ENCODE measurements at regions of chr11 and their contacts with region 1.

Region 1: GRCh38 chr11:46588131-46588530 is 5.7 kb downstream of the AMBRA1 start:
- DNase-seq: no peak
- ATAC-seq: no peak
- H3K4me3 ChIP-seq: no peak overlapping the region
- H3K27ac ChIP-seq: no peak overlapping the region
- H3K4me1 ChIP-seq: no peaks in the 10 kb centered on the region
- H3K27me3 ChIP-seq: no peaks in the 10 kb centered on the region
- CTCF ChIP-seq: no peak
- EP300 ChIP-seq: no peak
- POLR2A ChIP-seq: no peak
- RAD21 ChIP-seq: no peak

Region 2: GRCh38 chr11:46570790-46571398 is 17.2 kb before region 1 on chr11:
- CTCF ChIA-PET with region 1: interaction called, 3 read pairs
- POLR2A ChIA-PET with region 1: interaction called, 10 read pairs
- RAD21 ChIA-PET with region 1: no interaction called
- SMC1A ChIA-PET with region 1: interaction called, 8 read pairs
- in situ Hi-C with region 1: no loop called
- intact Hi-C with region 1: no loop called
- DNase-seq: no peak
- ATAC-seq: peak; percentile 48
- H3K4me3 ChIP-seq: no peak overlapping the region
- H3K27ac ChIP-seq: no peak overlapping the region
- H3K4me1 ChIP-seq: peaks cover 8% of the 10 kb centered on the region
- H3K27me3 ChIP-seq: no peaks in the 10 kb centered on the region
- CTCF ChIP-seq: no peak
- EP300 ChIP-seq: no peak
- POLR2A ChIP-seq: no peak
- RAD21 ChIP-seq: no peak

Region 3: GRCh38 chr11:46700241-46701077 is 112.3 kb after region 1 on chr11 and contains the starts of genes ARHGAP1 and ZNF408:
- CTCF ChIA-PET with region 1: no interaction called
- POLR2A ChIA-PET with region 1: no interaction called
- RAD21 ChIA-PET with region 1: no interaction called
- SMC1A ChIA-PET with region 1: no interaction called
- in situ Hi-C with region 1: no loop called
- intact Hi-C with region 1: no loop called
- DNase-seq: peak; percentile 96
- ATAC-seq: peak; percentile 98
- H3K4me3 ChIP-seq: peak within 1 kb of the TSS; percentile 92
- H3K27ac ChIP-seq: peak within 1 kb of the TSS; percentile 99
- H3K4me1 ChIP-seq: peaks cover 4% of the 10 kb centered on the region
- H3K27me3 ChIP-seq: no peaks in the 10 kb centered on the region
- CTCF ChIP-seq: no peak
- EP300 ChIP-seq: no peak
- POLR2A ChIP-seq: peak; percentile 91
- RAD21 ChIP-seq: no peak
- polyA plus RNA-seq, gene ARHGAP1: 4.3 to 9.4 TPM
- polyA plus RNA-seq, gene ZNF408: 0.19 to 0.35 TPM

Region 4: GRCh38 chr11:46710821-46711269 is 122.7 kb after region 1 on chr11:
- CTCF ChIA-PET with region 1: no interaction called
- POLR2A ChIA-PET with region 1: no interaction called
- RAD21 ChIA-PET with region 1: no interaction called
- SMC1A ChIA-PET with region 1: no interaction called
- in situ Hi-C with region 1: no loop called
- intact Hi-C with region 1: no loop called
- DNase-seq: no peak
- ATAC-seq: no peak
- H3K4me3 ChIP-seq: no peak overlapping the region
- H3K27ac ChIP-seq: no peak overlapping the region
- H3K4me1 ChIP-seq: no peaks in the 10 kb centered on the region
- H3K27me3 ChIP-seq: no peaks in the 10 kb centered on the region
- CTCF ChIP-seq: no peak
- EP300 ChIP-seq: no peak
- POLR2A ChIP-seq: no peak
- RAD21 ChIP-seq: no peak

Measured in GM12878 (cell line).